Posterior cingulate gyrus (tissue), 11 donors: ENCODE measurements at regions of chr9 and their contacts with region 1.

Region 1: DNA sequence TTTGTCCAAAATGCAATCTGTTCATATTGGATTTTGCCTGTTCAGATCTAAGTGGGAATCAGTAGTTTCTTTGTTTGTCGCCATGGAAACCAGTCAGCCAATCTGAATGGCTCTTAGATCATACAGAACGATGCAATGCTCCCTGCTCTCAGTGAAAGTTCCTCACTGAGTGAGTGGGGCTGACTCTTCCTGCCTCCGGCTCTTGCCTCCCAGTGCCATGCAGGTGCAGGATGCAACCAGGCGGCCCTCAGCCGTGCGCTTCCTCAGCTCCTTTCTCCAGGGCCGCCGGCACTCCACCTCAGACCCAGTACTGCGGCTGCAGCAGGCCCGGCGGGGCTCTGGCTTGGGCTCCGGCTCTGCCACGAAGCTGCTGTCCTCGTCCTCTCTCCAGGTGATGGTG is at the start of gene PTPDC1:
- DNase-seq: peak; percentile 40 to 96 (median 70)

Region 2: DNA sequence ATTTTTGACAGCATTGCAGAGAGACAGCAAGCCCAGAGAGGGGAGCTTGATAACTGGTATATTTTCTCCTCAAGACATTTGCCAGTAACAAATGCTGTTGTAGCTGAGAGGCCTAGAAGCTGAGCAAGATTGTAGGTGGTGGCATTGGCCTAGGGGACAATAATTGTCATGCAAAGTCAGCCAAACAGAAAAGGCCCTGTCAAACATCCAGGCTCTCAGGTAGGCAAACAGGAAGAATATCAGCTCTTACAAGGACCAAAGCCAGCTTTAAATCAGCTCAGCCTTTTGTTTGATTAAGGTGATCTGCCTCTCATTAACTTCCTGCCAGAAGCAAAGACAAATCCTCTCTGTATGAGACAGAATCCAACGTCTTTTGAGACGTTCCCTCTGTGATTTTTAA is 99.5 kb before region 1 on chr9:
- intact Hi-C with region 1: no loop called
- DNase-seq: no peak

Region 3: DNA sequence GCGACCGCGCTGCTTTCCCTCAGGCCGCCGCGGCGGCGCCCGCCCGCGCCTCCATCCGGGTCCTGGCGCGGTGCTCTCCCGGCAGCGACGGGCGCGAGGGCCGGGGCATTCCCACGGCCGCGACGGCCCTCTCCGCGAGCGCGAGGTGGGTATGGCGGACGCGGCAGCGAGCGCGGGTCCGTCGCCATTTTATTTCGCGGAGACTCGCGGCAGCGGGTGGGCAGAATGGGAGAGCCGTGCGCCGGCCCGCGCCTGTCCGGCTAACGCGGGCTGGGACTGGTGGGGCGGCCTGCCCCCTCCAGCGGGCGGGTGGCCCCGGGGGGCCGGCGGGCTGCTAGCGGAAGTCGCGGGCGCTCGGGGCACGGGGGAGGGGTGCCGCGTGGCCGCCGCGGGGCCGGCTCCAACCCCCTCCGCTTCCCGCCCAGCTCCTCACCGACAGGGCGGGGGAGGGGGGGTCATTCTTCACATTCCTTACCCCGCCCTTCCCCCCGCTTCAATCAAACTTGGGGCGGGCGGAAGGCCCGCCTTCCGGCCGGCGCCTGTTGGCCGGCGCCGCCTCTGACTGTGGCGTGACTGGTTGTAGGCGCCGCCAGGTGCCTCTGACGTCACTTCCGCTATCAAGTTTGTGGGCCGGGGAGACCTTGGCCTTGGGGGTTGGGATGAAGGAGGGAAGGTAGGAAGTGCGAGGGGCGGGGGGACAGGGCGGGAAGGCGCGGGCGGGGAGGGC is 82.1 kb after region 1 on chr9:
- intact Hi-C with region 1: loop called (anchors 5 kb)
- DNase-seq: peak; percentile 91 to 99 (median 94)